ENCODE measurements at regions of chr18 and their contacts with region 1.

Region 1: DNA sequence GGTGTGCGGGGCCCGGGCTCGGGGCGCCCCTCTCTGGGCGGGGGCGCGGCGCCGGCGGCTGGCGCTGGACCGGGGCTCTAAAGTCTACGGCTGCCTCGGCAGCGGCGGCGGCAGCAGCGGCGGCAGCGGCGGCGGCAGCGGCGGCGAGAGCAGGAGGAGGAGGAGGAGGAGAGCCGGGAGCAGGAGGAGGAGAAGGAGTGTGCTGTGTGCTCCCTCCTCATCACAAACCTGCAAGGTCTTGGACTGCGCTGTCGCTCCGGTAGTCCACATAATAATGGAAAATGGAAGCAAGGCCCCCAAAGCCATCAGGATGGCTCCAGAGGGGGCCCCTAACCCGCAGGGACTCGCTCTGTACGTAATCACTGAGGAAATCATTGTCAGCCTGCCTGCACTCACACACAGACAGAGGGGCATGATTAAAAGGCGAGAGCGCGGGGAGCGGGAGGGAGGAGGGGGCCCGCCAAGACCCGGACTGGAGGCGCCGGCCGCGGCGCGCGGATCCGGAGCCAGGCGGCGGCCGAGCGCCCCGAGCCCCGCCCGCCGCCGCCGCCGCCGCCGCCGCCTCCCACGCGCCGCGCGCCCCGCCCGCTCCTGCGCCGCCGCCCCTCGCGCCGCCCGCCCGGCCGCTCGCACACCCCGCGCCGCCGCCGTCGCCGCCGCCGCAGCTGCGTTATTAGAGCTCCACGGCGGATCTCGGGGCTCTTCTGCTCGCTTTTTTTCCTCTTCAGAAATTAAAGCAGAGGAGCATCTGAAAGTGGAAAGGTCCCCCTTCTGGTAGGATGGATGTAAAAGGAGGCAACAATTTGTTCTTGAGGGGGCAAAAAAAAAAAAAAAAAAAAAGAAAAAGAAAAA is at the start of gene ZNF521:
- DNase-seq: peak; percentile 66
- H3K4me3 ChIP-seq: peak within 1 kb of the TSS; percentile 48 to 64 (median 56)
- H3K27ac ChIP-seq: no peak within 1 kb of the TSS
- H3K4me1 ChIP-seq: peaks cover 16% of the 10 kb centered on the region
- H3K27me3 ChIP-seq: peaks cover 48% of the 10 kb centered on the region
- CTCF ChIP-seq: peak in 1 of 2 donors; percentile 26
- total RNA-seq, gene ZNF521: 18.0 TPM in 1 of 2 donors, not detected in the other

Region 2: GRCh38 chr18:25299426-25300300 is 52.3 kb before region 1 on chr18:
- CTCF ChIA-PET with region 1: no interaction called
- dilution Hi-C with region 1: no loop called
- in situ Hi-C with region 1: no loop called
- intact Hi-C with region 1: loop called (anchors 5 kb)
- DNase-seq: peak; percentile 69
- H3K4me3 ChIP-seq: no peak overlapping the region
- H3K27ac ChIP-seq: peak overlapping the region; percentile 56
- H3K4me1 ChIP-seq: peaks cover 15% of the 10 kb centered on the region
- H3K27me3 ChIP-seq: peaks cover 3% of the 10 kb centered on the region
- CTCF ChIP-seq: no peak

Region 3: DNA sequence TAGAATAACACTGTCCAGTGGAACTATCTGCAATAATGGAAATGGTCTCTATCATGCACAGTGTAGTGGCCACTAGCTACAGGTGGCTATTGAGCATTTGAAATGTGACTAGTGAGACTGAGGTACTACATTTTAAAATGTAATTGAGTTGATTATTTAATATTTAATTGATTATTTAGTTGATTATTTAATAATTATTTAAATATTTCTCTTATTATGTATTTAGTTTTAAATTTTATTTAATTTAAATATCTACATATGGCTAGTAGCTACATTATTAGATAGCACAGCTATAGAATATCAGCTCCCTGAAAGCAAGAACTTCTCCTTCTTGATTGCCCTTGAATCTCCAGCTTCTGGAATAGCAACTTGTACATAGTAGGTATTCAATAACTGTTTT is 12.7 kb after region 1 on chr18:
- CTCF ChIA-PET with region 1: interaction called, 25 read pairs
- dilution Hi-C with region 1: no loop called
- in situ Hi-C with region 1: no loop called
- intact Hi-C with region 1: no loop called
- DNase-seq: no peak
- H3K4me3 ChIP-seq: no peak overlapping the region
- H3K27ac ChIP-seq: no peak overlapping the region
- H3K4me1 ChIP-seq: no peaks in the 10 kb centered on the region
- H3K27me3 ChIP-seq: peaks cover 5% of the 10 kb centered on the region
- CTCF ChIP-seq: no peak

Region 4: GRCh38 chr18:25503567-25504081 is 151.6 kb after region 1 on chr18:
- CTCF ChIA-PET with region 1: interaction called, 3 read pairs
- dilution Hi-C with region 1: no loop called
- in situ Hi-C with region 1: no loop called
- intact Hi-C with region 1: loop called (anchors 1 kb)
- DNase-seq: peak; percentile 55
- H3K4me3 ChIP-seq: peak overlapping the region; percentile 12 to 39 (median 13)
- H3K27ac ChIP-seq: no peak overlapping the region
- H3K4me1 ChIP-seq: no peaks in the 10 kb centered on the region
- H3K27me3 ChIP-seq: no peaks in the 10 kb centered on the region
- CTCF ChIP-seq: no peak